ENCODE measurements at regions of chr12 and their contacts with region 1.

Region 1: DNA sequence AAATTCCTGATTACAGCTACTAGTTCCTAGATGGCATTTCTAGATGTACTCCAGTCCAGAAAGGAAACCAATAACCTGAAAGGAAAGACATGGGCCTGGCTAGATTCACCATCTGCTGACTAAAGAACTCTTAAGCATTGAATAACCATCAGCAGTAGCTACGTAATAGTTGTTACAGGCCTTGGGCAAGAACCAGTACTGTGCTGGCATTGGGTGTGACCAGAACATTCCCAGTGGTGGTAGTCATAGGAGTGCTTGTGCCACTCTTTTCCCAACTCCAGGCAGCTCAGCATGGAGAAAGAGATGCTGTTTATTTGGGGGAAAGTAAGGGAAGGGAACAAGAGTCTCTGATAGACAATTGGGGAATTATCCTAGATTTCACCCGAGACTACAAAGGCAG is 333.3 kb downstream of the SLC16A7 start:
- DNase-seq: peak; percentile 95
- H3K4me3 ChIP-seq: no peak overlapping the region
- H3K27ac ChIP-seq: peak overlapping the region; percentile 86
- H3K4me1 ChIP-seq: peaks cover 32% of the 10 kb centered on the region
- H3K27me3 ChIP-seq: no peaks in the 10 kb centered on the region
- CTCF ChIP-seq: no peak

Region 2: DNA sequence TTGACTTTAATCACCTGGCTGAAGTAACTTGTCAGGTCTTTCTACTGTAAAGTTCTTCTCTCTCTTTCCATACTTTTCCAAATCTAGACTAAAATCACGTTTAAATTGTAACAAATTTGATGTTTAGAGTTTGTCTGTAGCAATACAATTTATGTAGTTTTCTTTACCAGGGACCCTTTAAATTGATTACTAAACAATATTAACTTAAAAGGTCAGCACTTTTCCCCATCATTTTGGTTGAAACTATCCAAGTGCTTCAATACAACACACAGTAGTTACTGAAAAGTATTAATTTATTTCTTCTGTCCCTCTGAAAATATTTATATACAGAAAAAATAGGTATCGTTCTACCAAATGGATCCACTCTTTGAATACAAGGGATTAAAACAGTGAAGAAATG is 17.5 kb after region 1 on chr12:
- CTCF ChIA-PET with region 1: no interaction called
- dilution Hi-C with region 1: no loop called
- in situ Hi-C with region 1: no loop called
- intact Hi-C with region 1: no loop called
- DNase-seq: no peak
- H3K4me3 ChIP-seq: no peak overlapping the region
- H3K27ac ChIP-seq: no peak overlapping the region
- H3K4me1 ChIP-seq: no peaks in the 10 kb centered on the region
- H3K27me3 ChIP-seq: no peaks in the 10 kb centered on the region
- CTCF ChIP-seq: no peak

Region 3: DNA sequence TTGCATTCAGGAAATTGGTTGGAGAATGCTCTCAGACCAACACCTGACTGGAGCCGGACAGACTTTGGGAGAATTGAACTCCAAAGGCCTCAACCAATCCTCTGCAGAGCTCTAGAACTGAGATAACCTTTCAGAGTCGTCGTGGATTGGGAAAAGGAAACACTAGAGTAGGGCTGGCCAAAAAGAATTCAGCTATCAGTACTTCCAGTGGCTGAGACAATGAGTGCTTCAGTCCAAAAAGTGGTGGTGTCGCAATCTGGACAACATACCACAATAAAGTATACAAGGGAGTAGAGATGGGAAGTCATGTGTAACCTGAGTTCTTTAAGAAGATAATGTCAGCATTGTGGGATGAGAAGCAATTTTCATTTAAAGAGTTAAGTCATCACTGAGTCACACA is 43.9 kb after region 1 on chr12:
- CTCF ChIA-PET with region 1: no interaction called
- dilution Hi-C with region 1: no loop called
- in situ Hi-C with region 1: no loop called
- intact Hi-C with region 1: loop called (anchors 5 kb)
- DNase-seq: peak; percentile 90
- H3K4me3 ChIP-seq: peak overlapping the region in 2 of 3 experiments; percentile 2 to 4
- H3K27ac ChIP-seq: peak overlapping the region; percentile 80
- H3K4me1 ChIP-seq: peaks cover 20% of the 10 kb centered on the region
- H3K27me3 ChIP-seq: no peaks in the 10 kb centered on the region
- CTCF ChIP-seq: no peak

Region 4: DNA sequence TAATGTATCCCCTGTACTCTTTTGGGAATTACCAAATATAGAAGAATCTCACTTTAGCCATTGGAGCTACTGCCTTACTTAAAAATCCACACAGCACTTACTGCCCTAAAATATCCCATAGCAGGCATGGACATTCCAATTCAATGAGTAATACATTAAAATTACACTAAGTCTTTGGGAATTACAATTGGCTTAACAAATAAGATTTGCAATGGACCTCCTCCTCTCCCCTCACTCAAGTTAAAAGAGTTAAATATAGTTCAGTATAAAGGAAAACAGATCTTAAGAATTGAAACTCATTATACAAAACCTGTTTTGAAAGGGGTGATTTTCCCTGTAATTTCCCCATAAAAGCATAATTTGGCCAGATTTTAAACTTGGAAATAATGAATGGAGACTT is 143.8 kb after region 1 on chr12:
- CTCF ChIA-PET with region 1: no interaction called
- dilution Hi-C with region 1: no loop called
- in situ Hi-C with region 1: no loop called
- intact Hi-C with region 1: loop called (anchors 10 kb)
- DNase-seq: no peak
- H3K4me3 ChIP-seq: no peak overlapping the region
- H3K27ac ChIP-seq: no peak overlapping the region
- H3K4me1 ChIP-seq: peaks cover 23% of the 10 kb centered on the region
- H3K27me3 ChIP-seq: no peaks in the 10 kb centered on the region
- CTCF ChIP-seq: no peak

Region 5: GRCh38 chr12:60194678-60195077 is 265.6 kb after region 1 on chr12:
- CTCF ChIA-PET with region 1: no interaction called
- dilution Hi-C with region 1: no loop called
- in situ Hi-C with region 1: no loop called
- intact Hi-C with region 1: loop called (anchors 5 kb)
- DNase-seq: peak; percentile 35
- H3K4me3 ChIP-seq: no peak overlapping the region
- H3K27ac ChIP-seq: no peak overlapping the region
- H3K4me1 ChIP-seq: peaks cover 2% of the 10 kb centered on the region
- H3K27me3 ChIP-seq: no peaks in the 10 kb centered on the region
- CTCF ChIP-seq: no peak